Sigmoid colon (tissue), 7 donors: ENCODE measurements at regions of chr6 and their contacts with region 1.

Region 1: DNA sequence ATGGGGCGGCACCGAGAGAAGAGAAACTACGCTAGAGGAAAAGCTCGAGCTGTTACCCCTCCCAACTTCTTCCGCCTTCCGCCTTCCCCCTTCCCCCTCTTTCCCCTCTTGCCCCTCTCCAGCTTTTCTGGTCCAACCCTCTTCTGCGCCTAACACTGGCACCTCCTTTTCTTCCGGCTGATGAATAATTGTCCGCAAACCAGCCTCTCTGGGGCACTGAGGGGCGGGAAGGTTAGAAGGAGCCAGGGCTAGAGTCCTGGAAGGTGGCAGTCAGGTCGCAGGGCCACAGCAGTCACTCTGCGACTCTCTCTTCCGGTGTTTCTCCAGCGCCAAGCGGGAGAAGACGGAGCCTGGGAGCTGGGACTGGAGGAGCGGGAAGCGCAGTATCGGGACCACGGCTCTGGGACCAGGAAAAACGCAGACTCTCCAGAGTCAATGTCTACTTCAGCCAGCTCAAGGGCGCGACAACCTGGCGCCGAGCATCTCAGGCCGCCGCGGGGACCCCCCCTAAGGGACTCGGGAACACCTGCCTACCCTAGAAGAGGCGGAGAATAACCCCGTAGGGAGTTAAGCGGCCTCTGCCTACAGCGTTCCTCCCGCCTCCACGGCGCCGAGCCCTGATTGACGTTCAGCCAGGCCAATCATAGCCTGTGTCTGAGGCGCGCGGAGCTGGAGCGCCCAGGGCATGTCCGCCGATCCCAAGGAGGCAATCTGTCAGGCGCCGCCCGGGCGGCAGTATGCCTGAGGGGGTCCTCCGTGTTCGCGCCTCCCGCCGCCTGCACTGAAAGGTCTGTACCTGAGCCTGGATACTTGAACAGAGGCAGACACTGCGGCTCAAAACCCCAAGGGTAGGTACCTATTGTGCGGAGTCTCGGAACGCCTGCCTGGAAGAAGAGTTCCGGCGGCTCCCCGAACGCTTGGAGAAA is 40.4 kb downstream of the PSMB9 start:
- DNase-seq: peak; percentile 96
- H3K4me3 ChIP-seq: peak overlapping the region; percentile 55 to 75 (median 69)
- H3K27ac ChIP-seq: peak overlapping the region; percentile 82 to 96 (median 92)
- H3K4me1 ChIP-seq: peaks cover 0 to 25% (median 13%) of the 10 kb centered on the region in 4 donors
- H3K27me3 ChIP-seq: no peaks in the 10 kb centered on the region
- CTCF ChIP-seq: no peak
- EP300 ChIP-seq: no peak
- POLR2A ChIP-seq: peak in 1 of 2 donors; percentile 84

Region 2: DNA sequence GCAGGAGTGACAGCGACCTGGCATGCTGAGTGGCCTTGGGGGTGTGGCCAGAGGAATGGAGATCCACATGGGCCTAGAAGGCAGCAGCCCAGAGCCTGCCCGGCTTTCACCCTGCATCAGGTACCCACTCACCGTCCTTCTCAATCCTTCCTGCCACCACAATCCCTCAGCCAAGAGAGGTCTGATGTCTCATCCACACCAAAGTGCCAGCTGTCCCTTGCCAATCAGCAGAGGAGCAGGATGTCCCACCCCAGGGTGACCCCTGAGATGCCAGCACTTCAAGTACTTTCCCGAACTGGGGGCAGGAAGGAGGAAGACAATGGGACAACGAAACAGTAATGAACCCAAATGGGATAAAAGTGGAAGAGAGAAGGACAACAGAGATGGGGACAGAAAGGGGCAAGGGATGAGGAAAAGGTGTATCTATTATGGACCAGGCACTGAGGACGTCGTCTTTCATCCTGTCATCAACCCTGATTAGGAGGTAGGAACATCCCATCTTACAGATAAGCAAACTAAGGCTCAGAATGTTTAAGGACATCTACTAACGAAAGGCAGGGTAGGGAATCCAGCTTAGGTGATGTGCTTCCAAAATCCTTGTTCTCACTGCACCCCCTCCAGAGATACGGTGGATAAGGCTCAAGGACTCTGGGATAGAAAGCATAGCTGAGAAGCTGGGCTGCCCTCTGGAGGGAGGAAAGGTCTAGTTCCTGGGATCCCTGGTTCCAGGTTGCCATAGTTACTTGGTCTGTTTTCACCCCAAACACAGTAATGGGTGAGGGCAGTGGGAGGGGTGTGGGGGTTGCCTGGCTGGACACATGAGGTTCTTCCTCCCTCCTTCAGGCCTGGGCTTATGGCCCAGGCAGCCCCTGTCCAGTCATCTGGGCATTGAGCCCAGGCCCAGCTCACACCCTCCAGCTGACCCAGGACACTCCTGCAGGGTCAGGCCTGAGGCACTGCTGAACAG is 780.7 kb before region 1 on chr6:
- intact Hi-C with region 1: no loop called
- DNase-seq: peak; percentile 96
- H3K4me3 ChIP-seq: no peak overlapping the region
- H3K27ac ChIP-seq: peak overlapping the region; percentile 70 to 80 (median 76)
- H3K4me1 ChIP-seq: peaks cover 0 to 59% (median 50%) of the 10 kb centered on the region in 4 donors
- H3K27me3 ChIP-seq: no peaks in the 10 kb centered on the region
- CTCF ChIP-seq: no peak
- EP300 ChIP-seq: no peak
- POLR2A ChIP-seq: no peak

Region 3: DNA sequence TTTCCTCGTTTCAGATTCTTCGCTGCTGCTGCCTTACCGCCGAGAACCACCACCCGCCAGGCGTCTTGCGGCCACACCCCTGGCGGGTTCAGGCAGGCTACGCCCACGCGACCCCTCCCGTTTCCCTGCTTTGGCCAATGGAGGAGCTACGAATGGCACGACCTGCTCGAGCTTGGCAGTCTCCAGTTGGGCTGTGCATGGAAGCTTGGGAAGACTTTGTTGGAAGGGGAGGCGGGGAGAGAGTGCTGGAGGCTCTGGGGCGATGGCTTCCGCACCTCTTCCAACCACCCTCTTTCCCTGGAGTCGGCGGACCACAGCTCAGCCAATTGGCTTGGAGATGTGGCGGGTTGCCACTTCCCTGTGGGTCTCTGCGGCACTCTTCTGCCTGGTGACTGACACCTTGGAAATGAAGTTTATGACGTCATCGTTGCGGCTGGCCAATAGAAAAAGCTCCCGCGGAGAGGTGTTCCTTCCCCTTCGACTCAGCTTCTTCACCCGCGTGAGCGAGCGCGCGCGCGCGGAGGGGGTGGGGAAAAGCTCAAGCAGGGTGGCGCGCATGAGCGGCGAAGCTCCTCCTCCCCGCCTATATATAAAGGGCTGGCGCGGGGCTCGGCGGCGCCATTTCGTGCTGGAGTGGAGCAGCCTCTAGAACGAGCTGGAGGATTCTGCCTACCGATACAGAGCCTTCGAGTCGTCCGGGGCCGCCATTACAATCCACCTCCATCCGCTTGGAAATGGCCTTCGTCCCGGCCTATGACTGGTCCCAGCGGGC is 77.4 kb after region 1 on chr6:
- intact Hi-C with region 1: loop called (anchors 5 kb)
- DNase-seq: peak; percentile 100
- H3K4me3 ChIP-seq: peak overlapping the region; percentile 71 to 87 (median 83)
- H3K27ac ChIP-seq: peak overlapping the region; percentile 98 to 99 (median 98)
- H3K4me1 ChIP-seq: peaks cover 0 to 41% (median 35%) of the 10 kb centered on the region in 4 donors
- H3K27me3 ChIP-seq: no peaks in the 10 kb centered on the region
- CTCF ChIP-seq: no peak
- EP300 ChIP-seq: peak in 2 of 4 donors; percentile 48 to 82
- POLR2A ChIP-seq: peak; percentile 99

Region 4: GRCh38 chr6:33082702-33083101 is 188.4 kb after region 1 on chr6:
- intact Hi-C with region 1: loop called (anchors 10 kb)
- DNase-seq: no peak
- H3K4me3 ChIP-seq: no peak overlapping the region
- H3K27ac ChIP-seq: peak overlapping the region in 3 of 4 donors; percentile 6 to 39 (median 24)
- H3K4me1 ChIP-seq: peaks cover 0 to 20% (median 14%) of the 10 kb centered on the region in 4 donors
- H3K27me3 ChIP-seq: no peaks in the 10 kb centered on the region
- CTCF ChIP-seq: peak in 2 of 4 experiments; percentile 41 to 46
- EP300 ChIP-seq: no peak
- POLR2A ChIP-seq: no peak